ENCODE measurements at regions of chr2 and their contacts with region 1.

Region 1: GRCh38 chr2:134181210-134181609 is 72.7 kb upstream of the MGAT5 start:
- DNase-seq: no peak
- CTCF ChIP-seq: no peak

Region 2: GRCh38 chr2:133986081-133986837 is 195.0 kb before region 1 on chr2:
- CTCF ChIA-PET with region 1: no interaction called
- POLR2A ChIA-PET with region 1: no interaction called
- DNase-seq: no peak
- CTCF ChIP-seq: no peak

Region 3: DNA sequence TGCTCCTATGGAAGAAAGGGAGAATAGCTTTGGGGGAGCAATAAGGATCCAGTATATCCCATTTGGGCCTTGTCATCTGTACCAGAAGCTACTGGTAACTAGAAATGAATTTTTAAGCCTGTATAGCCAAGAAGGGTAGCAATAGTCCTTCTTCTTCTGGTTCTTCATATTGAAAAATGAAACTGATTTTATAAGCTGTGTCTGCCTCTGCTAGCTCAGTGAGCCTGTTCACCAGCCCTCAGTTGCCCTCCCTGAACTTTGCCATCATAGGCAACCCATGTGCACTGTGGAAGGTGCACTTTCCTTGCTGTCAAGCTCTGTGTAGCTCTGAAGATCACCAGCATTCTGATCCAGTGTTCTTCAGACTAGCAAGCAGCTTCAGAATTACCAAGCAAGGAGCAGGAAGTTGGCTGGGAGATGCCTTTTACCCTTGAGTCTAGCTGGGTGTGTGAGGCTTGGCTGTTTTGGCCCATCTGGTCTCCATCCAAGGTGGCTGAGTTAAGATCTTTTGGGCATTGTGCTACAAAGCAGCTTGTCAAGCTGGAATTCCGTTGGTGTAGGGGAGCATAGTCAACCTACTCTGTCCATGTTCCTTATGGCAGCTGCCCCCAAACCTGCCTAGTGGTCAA is 16.9 kb after region 1 on chr2:
- CTCF ChIA-PET with region 1: interaction called, 18 read pairs
- POLR2A ChIA-PET with region 1: no interaction called
- DNase-seq: no peak
- CTCF ChIP-seq: no peak